ENCODE measurements at regions of chr17 and their contacts with region 1.

Region 1: GRCh38 chr17:74457146-74457819 is 9.2 kb upstream of the CD300A start:
- DNase-seq: peak; percentile 73 to 90 (median 79)
- ATAC-seq: peak in 3 of 4 donors; percentile 22 to 27 (median 25)
- H3K4me3 ChIP-seq: peak overlapping the region in 2 of 12 donors; percentile 6 to 17
- H3K27ac ChIP-seq: peak overlapping the region in 4 of 12 donors; percentile 11 to 55 (median 32)
- H3K4me1 ChIP-seq: peaks cover 8 to 48% (median 36%) of the 10 kb centered on the region in 12 donors
- H3K27me3 ChIP-seq: peaks cover 0 to 5% (median 0%) of the 10 kb centered on the region in 9 donors
- CTCF ChIP-seq: peak; percentile 91 to 98 (median 95)
- POLR2A ChIP-seq: no peak

Region 2: GRCh38 chr17:74203439-74204240 is 253.6 kb before region 1 on chr17 and contains the start of gene RPL38:
- intact Hi-C with region 1: loop called in 2 of 10 experiments (anchors 10 kb)
- DNase-seq: peak; percentile 94 to 97 (median 96)
- ATAC-seq: peak; percentile 81 to 89 (median 86)
- H3K4me3 ChIP-seq: peak within 1 kb of the TSS; percentile 74 to 97 (median 90)
- H3K27ac ChIP-seq: peak within 1 kb of the TSS; percentile 58 to 93 (median 81)
- H3K4me1 ChIP-seq: peaks cover 0 to 55% (median 37%) of the 10 kb centered on the region in 12 donors
- H3K27me3 ChIP-seq: peaks cover 0 to 23% (median 17%) of the 10 kb centered on the region in 9 donors
- CTCF ChIP-seq: peak; percentile 86 to 98 (median 94)
- POLR2A ChIP-seq: peak in 1 of 2 donors; percentile 85
- total RNA-seq, gene RPL38: 244 to 836 (median 739) TPM

Region 3: DNA sequence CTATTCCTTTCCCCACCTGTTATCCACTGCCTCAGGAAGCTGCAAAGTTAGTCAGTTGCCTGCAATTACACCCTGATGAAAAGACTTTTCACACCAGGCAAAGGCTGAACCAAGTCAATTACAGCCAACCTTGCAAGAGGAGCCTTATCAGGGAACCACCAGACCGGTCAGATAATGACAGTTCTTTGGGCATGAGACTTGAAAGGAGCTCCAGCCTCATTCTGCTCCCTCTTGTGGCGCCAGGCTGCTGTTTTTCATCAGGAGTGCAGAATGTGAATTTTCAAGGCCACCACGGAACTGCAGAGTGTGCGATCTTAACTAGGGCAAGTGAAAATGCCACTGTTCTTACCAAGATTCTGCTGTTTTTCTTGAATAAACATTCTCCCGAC is 160.7 kb before region 1 on chr17:
- intact Hi-C with region 1: loop called in 6 of 10 experiments (anchors 5 to 10 kb)
- DNase-seq: peak; percentile 68 to 87 (median 76)
- ATAC-seq: peak; percentile 74 to 84 (median 81)
- H3K4me3 ChIP-seq: peak overlapping the region in 1 of 12 donors; percentile 5
- H3K27ac ChIP-seq: peak overlapping the region; percentile 53 to 97 (median 84)
- H3K4me1 ChIP-seq: peaks cover 0 to 18% (median 10%) of the 10 kb centered on the region in 12 donors
- H3K27me3 ChIP-seq: no peaks in the 10 kb centered on the region
- CTCF ChIP-seq: peak; percentile 50 to 78 (median 66)
- POLR2A ChIP-seq: no peak

Region 4: GRCh38 chr17:74305865-74306654 is 151.2 kb before region 1 on chr17:
- intact Hi-C with region 1: loop called in 4 of 10 experiments (anchors 10 kb)
- DNase-seq: no peak
- ATAC-seq: no peak
- H3K4me3 ChIP-seq: no peak overlapping the region
- H3K27ac ChIP-seq: no peak overlapping the region
- H3K4me1 ChIP-seq: peaks cover 0 to 11% (median 4%) of the 10 kb centered on the region in 12 donors
- H3K27me3 ChIP-seq: no peaks in the 10 kb centered on the region
- CTCF ChIP-seq: peak in 6 of 12 donors; percentile 5 to 25 (median 15)
- POLR2A ChIP-seq: no peak

Region 5: GRCh38 chr17:74379495-74380085 is 77.7 kb before region 1 on chr17:
- intact Hi-C with region 1: loop called (anchors 1 kb)
- DNase-seq: peak; percentile 89 to 97 (median 90)
- ATAC-seq: peak; percentile 84 to 97 (median 94)
- H3K4me3 ChIP-seq: peak overlapping the region in 7 of 12 donors; percentile 5 to 41 (median 14)
- H3K27ac ChIP-seq: peak overlapping the region in 8 of 12 donors; percentile 7 to 56 (median 28)
- H3K4me1 ChIP-seq: peaks cover 0 to 18% (median 12%) of the 10 kb centered on the region in 12 donors
- H3K27me3 ChIP-seq: peaks cover 0 to 7% (median 0%) of the 10 kb centered on the region in 9 donors
- CTCF ChIP-seq: peak; percentile 91 to 99 (median 97)
- POLR2A ChIP-seq: no peak

Region 6: GRCh38 chr17:74430706-74431567 is 26.3 kb before region 1 on chr17:
- intact Hi-C with region 1: loop called in 2 of 10 experiments (anchors 1 to 2 kb)
- DNase-seq: peak; percentile 83 to 90 (median 87)
- ATAC-seq: peak; percentile 59 to 76 (median 74)
- H3K4me3 ChIP-seq: peak overlapping the region; percentile 48 to 90 (median 69)
- H3K27ac ChIP-seq: peak overlapping the region; percentile 87 to 99 (median 96)
- H3K4me1 ChIP-seq: peaks cover 0 to 71% (median 36%) of the 10 kb centered on the region in 12 donors
- H3K27me3 ChIP-seq: peaks cover 0 to 49% (median 0%) of the 10 kb centered on the region in 9 donors
- CTCF ChIP-seq: no peak
- POLR2A ChIP-seq: peak in 1 of 2 donors; percentile 32

Region 7: DNA sequence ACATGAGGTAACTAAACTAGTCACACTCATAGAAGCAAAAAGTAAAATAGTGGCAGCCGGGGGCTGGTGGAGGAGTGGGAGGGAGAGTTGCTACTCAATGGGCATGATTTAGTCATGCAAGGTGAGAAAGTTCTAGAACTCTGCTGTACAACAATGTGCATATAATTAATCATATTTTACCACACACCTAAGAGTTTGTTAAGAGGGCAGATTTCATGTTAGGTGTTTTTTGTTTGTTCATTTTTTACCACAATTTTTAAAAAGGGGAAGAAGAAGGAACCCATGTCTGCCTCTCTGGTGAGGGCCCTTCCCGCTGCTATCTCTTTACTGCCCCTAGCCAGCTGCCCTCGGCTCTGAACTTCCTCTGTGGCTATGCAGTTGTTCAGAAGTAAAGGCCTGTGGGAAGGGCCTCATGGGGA is 62.7 kb after region 1 on chr17:
- intact Hi-C with region 1: no loop called
- DNase-seq: peak in 3 of 5 donors; percentile 36 to 63 (median 50)
- ATAC-seq: peak; percentile 49 to 80 (median 75)
- H3K4me3 ChIP-seq: no peak overlapping the region
- H3K27ac ChIP-seq: peak overlapping the region in 4 of 12 donors; percentile 49 to 94 (median 68)
- H3K4me1 ChIP-seq: peaks cover 0 to 48% (median 0%) of the 10 kb centered on the region in 12 donors
- H3K27me3 ChIP-seq: no peaks in the 10 kb centered on the region
- CTCF ChIP-seq: no peak
- POLR2A ChIP-seq: no peak